ENCODE measurements at regions of chr12 and their contacts with region 1.

Region 1: DNA sequence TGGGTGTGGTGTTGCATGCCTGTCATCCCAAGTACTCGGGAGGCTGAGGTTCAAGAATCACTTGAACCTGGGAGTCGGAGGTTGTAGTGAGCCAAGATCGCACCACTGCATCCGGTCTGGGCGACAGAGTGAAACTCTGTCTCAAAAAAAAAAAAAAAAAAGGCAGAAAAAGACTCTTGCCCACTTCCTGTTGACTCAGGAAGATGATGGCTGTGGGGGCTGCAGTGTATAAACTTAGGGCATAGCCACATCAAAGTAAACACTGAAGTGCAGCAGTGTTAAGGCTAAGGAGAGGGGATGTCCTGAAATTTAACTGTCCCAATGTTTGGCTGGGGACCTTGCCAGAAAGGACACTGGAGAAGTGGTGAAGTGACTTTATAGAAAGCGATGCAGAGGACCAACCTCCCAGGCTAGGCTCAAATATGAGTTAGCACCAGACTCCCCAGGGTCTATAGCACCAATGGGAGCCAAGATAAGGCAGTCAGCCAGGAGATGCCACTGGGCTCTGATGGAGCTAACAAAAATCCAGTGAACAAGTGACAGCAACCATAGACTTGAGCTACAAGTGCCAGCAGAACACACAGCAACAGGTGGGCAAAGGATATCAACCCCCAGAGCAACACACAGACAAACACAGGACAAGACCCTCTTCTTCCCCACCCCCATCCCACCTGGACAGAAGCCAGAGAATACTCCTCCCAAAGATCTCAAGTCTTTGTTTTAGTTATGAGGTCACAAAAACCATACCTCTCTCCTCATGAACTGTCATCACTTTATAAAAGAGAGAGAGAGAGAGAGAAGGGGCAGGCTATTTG is 28.0 kb downstream of the NELL2 start:
- DNase-seq: peak; percentile 67
- ATAC-seq: peak; percentile 84
- H3K4me3 Mint-ChIP-seq: peak overlapping the region; percentile 79
- H3K27ac Mint-ChIP-seq: peak overlapping the region; percentile 96
- H3K4me1 Mint-ChIP-seq: peaks cover 64% of the 10 kb centered on the region
- H3K27me3 Mint-ChIP-seq: no peaks in the 10 kb centered on the region

Region 2: GRCh38 chr12:44663291-44663690 is 184.8 kb before region 1 on chr12:
- POLR2A ChIA-PET with region 1: no interaction called
- DNase-seq: no peak
- ATAC-seq: no peak
- H3K4me3 Mint-ChIP-seq: no peak overlapping the region
- H3K27ac Mint-ChIP-seq: no peak overlapping the region
- H3K4me1 Mint-ChIP-seq: peaks cover 2% of the 10 kb centered on the region
- H3K27me3 Mint-ChIP-seq: no peaks in the 10 kb centered on the region

Region 3: GRCh38 chr12:44827832-44828438 is 20.2 kb before region 1 on chr12:
- POLR2A ChIA-PET with region 1: interaction called, 31 read pairs
- DNase-seq: no peak
- ATAC-seq: peak; percentile 59
- H3K4me3 Mint-ChIP-seq: peak overlapping the region; percentile 85
- H3K27ac Mint-ChIP-seq: peak overlapping the region; percentile 93
- H3K4me1 Mint-ChIP-seq: peaks cover 52% of the 10 kb centered on the region
- H3K27me3 Mint-ChIP-seq: no peaks in the 10 kb centered on the region

Region 4: GRCh38 chr12:44835641-44836379 is 12.3 kb before region 1 on chr12:
- POLR2A ChIA-PET with region 1: interaction called, 31 read pairs
- DNase-seq: no peak
- ATAC-seq: peak; percentile 65
- H3K4me3 Mint-ChIP-seq: peak overlapping the region; percentile 83
- H3K27ac Mint-ChIP-seq: peak overlapping the region; percentile 96
- H3K4me1 Mint-ChIP-seq: peaks cover 74% of the 10 kb centered on the region
- H3K27me3 Mint-ChIP-seq: no peaks in the 10 kb centered on the region

Region 5: GRCh38 chr12:44875954-44876553 is 28.0 kb after region 1 on chr12 and contains the start of gene NELL2:
- POLR2A ChIA-PET with region 1: interaction called, 11 read pairs
- DNase-seq: peak; percentile 73
- ATAC-seq: peak; percentile 77
- H3K4me3 Mint-ChIP-seq: peak within 1 kb of the TSS; percentile 96
- H3K27ac Mint-ChIP-seq: peak within 1 kb of the TSS; percentile 91
- H3K4me1 Mint-ChIP-seq: peaks cover 25% of the 10 kb centered on the region
- H3K27me3 Mint-ChIP-seq: peaks cover 2% of the 10 kb centered on the region
- total RNA-seq, gene NELL2: 147 to 161 TPM